Left lung (tissue), 14 donors: ENCODE measurements at regions of chr12 and their contacts with region 1.

Region 1: DNA sequence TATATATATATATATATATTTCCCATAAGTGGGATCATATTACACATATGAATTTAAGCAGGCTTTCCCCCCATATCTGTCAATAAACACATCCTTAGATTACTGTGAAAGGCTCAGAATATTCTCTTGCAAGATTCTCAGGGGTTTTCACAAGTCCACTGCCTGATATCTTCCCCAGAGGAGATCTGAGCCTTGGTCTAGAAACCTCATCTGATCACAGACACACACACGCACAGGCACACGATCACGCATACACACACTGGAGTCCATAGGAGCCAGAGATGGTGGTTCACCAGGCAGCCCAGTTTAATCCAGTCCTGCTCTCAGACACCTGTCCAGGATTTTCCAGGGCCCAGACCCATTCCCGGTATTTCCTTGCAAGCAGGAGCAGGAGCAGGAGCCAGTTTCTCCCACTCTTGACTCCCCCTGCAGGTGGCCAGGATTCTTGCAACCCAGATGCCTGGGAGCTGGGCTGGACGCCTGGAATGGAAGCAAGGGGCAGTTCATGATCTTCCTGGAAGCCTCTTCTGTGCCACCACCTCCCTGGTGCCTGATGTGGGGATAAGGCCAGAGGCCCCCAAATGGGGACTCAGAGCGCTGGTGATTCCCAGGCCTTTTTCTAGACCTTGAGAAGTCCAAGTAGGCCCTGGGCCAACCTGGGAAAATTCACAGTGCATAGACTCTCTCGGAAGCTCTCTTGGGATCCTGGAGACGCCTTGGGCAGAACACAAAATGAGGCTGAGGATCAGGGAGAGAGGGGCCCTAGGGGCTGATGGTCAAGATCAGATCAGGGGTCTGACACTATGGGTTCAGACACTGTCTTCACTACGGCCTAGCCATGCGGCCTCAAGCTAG is 16.5 kb upstream of the KRT78 start:
- DNase-seq: peak in 3 of 4 donors; percentile 62 to 78 (median 69)
- ATAC-seq: peak; percentile 92
- H3K4me3 ChIP-seq: no peak overlapping the region
- H3K27ac ChIP-seq: no peak overlapping the region
- H3K4me1 ChIP-seq: peaks cover 0 to 9% of the 10 kb centered on the region in 2 donors
- H3K27me3 ChIP-seq: no peaks in the 10 kb centered on the region
- CTCF ChIP-seq: peak; percentile 73 to 81

Region 2: DNA sequence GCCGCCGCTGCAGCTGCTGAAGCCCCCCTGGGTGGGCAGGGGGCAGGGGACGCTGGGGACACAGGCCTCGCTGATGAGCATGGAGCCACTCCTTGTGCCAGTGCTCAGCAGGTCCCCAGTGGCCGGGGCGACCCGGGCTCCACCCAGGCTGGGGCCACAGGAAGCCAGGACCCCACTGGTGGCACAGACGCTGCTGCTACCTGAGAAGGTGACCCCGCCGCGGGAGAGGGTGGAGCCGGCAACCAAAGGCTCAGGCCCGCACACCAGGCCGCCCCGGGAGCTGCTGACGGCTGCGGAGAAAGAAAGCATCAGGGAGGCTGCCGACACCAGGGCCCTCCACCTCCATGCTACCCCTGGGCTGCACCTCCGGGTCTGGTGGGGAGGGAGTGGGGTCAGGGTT is 487.2 kb before region 1 on chr12:
- intact Hi-C with region 1: loop called in 1 of 2 experiments (anchors 5 kb)
- DNase-seq: no peak
- ATAC-seq: no peak
- H3K4me3 ChIP-seq: no peak overlapping the region
- H3K27ac ChIP-seq: no peak overlapping the region
- H3K4me1 ChIP-seq: no peaks in the 10 kb centered on the region
- H3K27me3 ChIP-seq: peaks cover 0 to 39% of the 10 kb centered on the region in 2 donors
- CTCF ChIP-seq: no peak

Region 3: GRCh38 chr12:52789637-52790426 is 75.5 kb before region 1 on chr12:
- intact Hi-C with region 1: no loop called
- DNase-seq: peak in 1 of 4 donors; percentile 81
- ATAC-seq: peak; percentile 42
- H3K4me3 ChIP-seq: no peak overlapping the region
- H3K27ac ChIP-seq: no peak overlapping the region
- H3K4me1 ChIP-seq: peaks cover 0 to 3% of the 10 kb centered on the region in 2 donors
- H3K27me3 ChIP-seq: peaks cover 8 to 76% of the 10 kb centered on the region in 2 donors
- CTCF ChIP-seq: no peak

Region 4: GRCh38 chr12:53174881-53175491 is 309.7 kb after region 1 on chr12:
- intact Hi-C with region 1: no loop called
- DNase-seq: no peak
- ATAC-seq: peak; percentile 80
- H3K4me3 ChIP-seq: no peak overlapping the region
- H3K27ac ChIP-seq: no peak overlapping the region
- H3K4me1 ChIP-seq: peaks cover 9 to 18% of the 10 kb centered on the region in 2 donors
- H3K27me3 ChIP-seq: no peaks in the 10 kb centered on the region
- CTCF ChIP-seq: peak in 1 of 2 donors; percentile 19